Sigmoid colon (tissue), 7 donors: ENCODE measurements at regions of chr2 and their contacts with region 1.

Region 1: DNA sequence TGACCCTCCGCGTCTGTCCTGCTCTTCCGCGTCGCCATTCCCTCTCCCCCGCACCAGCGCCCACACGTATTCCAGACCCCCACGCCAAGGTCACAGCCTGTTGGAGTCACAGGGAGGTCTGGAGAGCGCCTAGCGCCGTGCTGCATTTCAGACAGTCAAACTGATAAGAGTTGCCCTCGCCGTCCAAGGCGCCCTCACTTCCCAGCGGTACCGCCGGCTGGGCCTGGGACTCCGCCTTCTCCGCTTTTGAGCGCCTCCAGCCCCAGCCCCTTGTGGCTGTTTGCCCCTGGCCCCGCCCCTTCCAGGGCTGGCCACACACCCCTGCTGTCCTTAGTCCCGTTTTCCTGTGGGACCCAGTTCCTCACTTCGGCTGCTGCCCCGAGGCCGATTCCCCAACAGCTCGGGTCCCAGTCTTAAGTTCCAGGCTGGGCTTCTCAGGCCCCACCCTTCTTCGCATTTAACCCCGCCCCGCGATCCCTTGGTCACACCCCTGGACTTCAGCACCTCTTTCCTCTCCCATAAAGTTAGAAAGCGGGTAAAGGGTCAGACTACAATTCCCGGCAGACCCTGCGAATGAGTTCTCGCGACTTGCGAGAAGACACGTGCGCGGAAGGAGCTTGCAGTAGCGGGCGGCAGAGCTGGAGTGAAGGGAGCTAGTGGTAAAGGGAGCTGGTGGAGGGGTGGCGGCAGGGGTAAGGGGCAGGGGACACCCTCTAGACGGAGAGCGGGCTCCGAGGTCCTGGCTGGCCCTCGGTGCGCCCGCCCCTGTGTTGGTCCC is at the start of gene GMPPA:
- DNase-seq: peak; percentile 99
- H3K4me3 ChIP-seq: peak within 1 kb of the TSS; percentile 62 to 76 (median 70)
- H3K27ac ChIP-seq: peak within 1 kb of the TSS; percentile 89 to 100 (median 99)
- H3K4me1 ChIP-seq: peaks cover 0 to 53% (median 43%) of the 10 kb centered on the region in 4 donors
- H3K27me3 ChIP-seq: no peaks in the 10 kb centered on the region
- CTCF ChIP-seq: no peak
- EP300 ChIP-seq: peak in 1 of 4 donors; percentile 64
- POLR2A ChIP-seq: peak; percentile 49 to 68
- total RNA-seq, gene GMPPA: 13.9 to 24.7 (median 21.3) TPM

Region 2: GRCh38 chr2:218536804-218537494 is 961.5 kb before region 1 on chr2:
- intact Hi-C with region 1: no loop called
- DNase-seq: no peak
- H3K4me3 ChIP-seq: no peak overlapping the region
- H3K27ac ChIP-seq: no peak overlapping the region
- H3K4me1 ChIP-seq: no peaks in the 10 kb centered on the region
- H3K27me3 ChIP-seq: no peaks in the 10 kb centered on the region
- CTCF ChIP-seq: no peak
- EP300 ChIP-seq: no peak
- POLR2A ChIP-seq: no peak

Region 3: DNA sequence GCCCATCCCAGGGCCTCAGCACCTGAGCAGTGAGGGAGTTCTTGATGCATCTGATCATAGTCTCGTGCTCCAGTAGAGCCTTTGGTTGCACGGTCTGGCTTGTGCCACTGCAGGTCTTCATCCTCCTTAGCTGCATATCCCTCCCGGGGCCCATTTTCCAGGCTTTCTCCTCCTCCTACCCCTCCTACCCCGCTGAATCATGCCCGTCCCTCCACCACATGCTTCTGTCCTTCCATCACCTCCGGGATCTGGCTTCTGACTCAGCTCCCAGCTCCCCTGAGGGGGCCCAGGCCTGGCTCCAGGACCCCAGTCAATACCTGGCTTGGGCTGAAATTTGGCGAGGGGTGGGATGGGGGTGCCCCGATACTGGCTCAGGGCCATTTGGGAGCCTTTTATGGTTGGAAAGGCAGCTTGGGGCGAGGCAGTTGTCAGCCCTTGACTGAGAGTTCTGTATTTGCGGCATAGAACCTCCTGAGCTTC is 45.6 kb before region 1 on chr2:
- intact Hi-C with region 1: loop called (anchors 2 kb)
- DNase-seq: peak; percentile 95
- H3K4me3 ChIP-seq: peak overlapping the region in 3 of 4 donors; percentile 2 to 52 (median 26)
- H3K27ac ChIP-seq: peak overlapping the region; percentile 96 to 99 (median 99)
- H3K4me1 ChIP-seq: peaks cover 0 to 99% (median 84%) of the 10 kb centered on the region in 4 donors
- H3K27me3 ChIP-seq: peaks cover 0 to 11% (median 0%) of the 10 kb centered on the region in 3 donors
- CTCF ChIP-seq: no peak
- EP300 ChIP-seq: peak in 3 of 4 donors; percentile 25 to 75 (median 30)
- POLR2A ChIP-seq: no peak

Region 4: DNA sequence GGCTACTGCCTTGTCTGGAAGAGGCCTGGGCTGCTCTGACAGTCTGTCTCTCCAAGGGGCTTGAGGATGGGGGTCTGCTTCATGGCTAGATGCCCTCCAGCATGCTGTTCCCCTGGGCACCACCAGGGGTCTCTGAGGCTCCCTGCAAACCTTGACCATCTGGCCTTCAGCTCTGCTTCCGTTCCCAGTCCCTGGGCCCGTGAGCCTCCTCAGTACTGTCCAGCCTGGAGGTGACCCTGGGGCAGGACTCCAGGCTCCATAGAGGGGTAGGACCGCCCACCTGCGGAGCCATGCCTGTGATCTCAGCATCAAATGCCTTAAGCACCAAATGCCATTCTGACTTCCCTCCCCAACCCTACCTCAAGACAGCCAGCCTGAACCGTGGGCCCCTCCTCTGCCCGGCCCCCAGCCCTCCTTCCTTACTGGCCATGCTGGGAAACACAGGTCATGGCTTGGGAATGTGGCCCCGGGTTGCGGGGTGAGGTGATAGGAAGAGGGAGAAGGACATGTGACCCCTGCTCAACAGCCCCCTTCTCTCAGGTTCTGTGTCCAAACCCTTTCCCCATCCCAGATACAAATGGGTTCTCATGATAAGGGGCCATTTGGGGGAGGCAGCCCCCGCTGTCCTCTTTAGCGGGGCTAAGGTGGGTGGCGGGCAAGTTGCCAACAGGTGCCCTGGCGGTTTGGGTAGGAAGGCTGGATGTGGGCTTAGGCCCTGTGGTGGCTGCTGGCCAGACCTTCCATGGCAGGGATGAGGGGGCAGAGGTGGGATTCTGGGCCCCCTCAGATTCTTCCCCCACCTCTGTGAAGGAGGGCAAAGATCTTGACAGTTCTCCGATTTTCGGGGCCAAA is 38.8 kb before region 1 on chr2:
- intact Hi-C with region 1: loop called (anchors 2 kb)
- DNase-seq: peak; percentile 88
- H3K4me3 ChIP-seq: peak overlapping the region in 2 of 4 donors; percentile 42 to 46
- H3K27ac ChIP-seq: peak overlapping the region; percentile 96 to 99 (median 99)
- H3K4me1 ChIP-seq: peaks cover 0 to 98% (median 88%) of the 10 kb centered on the region in 4 donors
- H3K27me3 ChIP-seq: no peaks in the 10 kb centered on the region
- CTCF ChIP-seq: peak; percentile 72 to 92 (median 89)
- EP300 ChIP-seq: no peak
- POLR2A ChIP-seq: no peak